ENCODE measurements at regions of chr4 and their contacts with region 1.

Region 1: DNA sequence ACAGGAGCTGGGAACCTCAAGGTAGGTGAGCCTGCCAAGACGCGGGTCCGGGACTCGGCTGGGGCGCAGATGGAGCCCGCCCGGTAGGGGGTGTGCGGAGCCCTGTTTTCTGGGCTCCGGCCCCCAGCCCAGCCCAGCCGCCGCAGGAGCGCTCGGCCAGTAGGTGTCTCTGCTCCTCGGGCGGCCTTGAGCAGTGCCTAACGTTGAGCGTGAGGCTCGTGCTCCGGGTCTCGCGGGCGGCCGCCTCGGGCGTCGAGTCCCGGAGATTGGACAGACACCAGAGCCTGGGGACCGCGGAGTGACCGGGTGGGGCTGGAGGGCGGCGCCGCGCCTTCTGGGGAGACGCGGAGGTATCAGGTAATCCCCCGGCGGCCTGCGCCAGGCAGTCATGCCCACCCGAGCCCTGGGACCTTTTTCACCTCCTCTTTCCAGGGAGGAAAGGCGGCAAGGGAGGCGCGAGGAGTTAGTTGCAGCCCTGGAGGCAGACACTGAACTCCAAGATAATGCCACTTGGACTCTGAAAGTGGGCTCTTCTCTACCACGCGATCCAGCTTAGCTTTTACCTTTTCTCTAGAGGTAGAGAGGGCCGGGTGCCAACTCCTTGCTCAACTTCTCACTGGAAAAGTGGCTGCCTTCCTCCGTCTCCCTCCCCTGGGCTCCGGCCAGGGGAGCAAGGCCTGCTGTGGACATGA is 14.5 kb upstream of the FGG start:
- DNase-seq: peak; percentile 80
- ATAC-seq: peak; percentile 98
- H3K4me3 Mint-ChIP-seq: no peak overlapping the region
- H3K27ac Mint-ChIP-seq: no peak overlapping the region
- H3K4me1 Mint-ChIP-seq: no peaks in the 10 kb centered on the region
- H3K27me3 Mint-ChIP-seq: peaks cover 13% of the 10 kb centered on the region

Region 2: DNA sequence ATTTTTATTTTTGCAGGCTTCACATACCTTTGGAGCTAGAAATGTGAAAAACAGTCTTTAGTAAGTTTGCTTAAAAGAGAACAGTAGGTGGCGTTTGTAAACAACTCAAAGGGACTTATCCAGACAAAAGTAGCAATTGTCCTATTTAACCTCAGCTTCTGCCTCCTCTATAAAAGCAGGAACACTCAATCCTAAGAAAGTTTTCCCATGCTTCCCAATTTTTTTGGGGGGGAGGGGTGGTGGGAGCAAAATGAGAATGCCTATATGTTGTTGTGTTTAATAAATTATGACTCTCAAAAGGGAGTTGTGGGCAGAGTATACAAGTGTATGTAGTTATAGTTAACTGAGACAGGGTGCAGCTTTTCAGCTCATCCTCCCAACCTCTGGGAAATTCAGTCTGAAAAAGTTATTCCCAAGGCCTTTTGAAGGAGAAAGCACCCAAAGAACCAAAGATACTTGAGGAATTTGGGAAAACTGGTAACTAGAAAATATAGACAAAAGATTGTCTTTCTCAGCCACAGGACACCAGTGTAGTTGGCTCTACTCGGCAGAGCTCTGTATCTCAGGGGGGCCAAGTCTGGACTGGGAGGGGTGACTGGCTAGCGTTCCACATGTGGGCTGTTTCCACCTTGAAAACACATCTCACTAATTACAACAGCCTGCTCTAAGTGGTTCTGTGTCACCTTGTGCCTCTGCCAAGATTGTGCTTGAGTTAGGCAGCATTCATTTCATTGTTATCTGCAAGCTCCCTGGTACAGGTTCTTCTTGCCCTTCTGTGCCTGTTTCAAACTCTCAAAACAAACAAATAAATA is 840.8 kb before region 1 on chr4:
- CTCF ChIA-PET with region 1: no interaction called
- POLR2A ChIA-PET with region 1: no interaction called
- intact Hi-C with region 1: loop called in 1 of 2 experiments (anchors 10 kb)
- DNase-seq: no peak
- ATAC-seq: no peak
- H3K4me3 Mint-ChIP-seq: no peak overlapping the region
- H3K27ac Mint-ChIP-seq: no peak overlapping the region
- H3K4me1 Mint-ChIP-seq: peaks cover 27% of the 10 kb centered on the region
- H3K27me3 Mint-ChIP-seq: peaks cover 65% of the 10 kb centered on the region

Region 3: DNA sequence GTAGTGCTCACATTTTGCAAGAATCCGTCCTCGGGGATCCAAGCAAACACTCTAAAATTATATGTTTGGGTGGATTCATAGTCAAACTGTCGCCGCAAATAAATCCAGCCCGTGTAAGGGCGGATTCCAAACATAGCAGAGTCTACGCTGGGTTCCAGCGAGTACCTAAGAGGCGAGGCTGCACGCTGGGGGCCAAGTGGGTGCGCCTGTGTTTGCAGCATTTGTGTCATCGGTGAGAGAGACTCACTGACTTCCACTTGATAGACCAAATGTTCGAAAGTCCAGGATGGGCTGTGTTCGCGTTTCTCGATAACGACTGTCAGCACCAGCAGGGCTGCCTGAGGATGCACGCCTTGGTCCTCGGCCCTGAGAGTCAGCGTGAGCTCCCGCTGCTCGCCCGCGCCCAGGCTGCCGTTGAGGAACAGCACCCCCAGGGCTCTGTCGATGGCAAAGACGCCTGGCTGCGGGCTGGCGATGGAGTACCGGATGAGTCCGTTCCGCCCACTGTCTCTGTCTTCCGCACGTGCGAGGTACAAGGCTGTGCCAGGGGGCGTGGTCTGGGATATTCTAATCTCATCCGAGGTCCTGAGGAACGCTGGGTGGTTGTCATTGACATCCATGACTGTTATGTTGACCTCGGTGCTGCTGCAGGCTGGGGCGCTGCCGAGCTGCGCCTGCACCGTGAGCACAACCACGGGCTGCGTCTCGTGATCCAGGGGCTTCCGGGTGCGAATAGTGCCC is 294.1 kb before region 1 on chr4:
- CTCF ChIA-PET with region 1: no interaction called
- POLR2A ChIA-PET with region 1: no interaction called
- intact Hi-C with region 1: loop called in 1 of 2 experiments (anchors 10 kb)
- DNase-seq: peak; percentile 82
- ATAC-seq: peak; percentile 95
- H3K4me3 Mint-ChIP-seq: peak overlapping the region; percentile 68
- H3K27ac Mint-ChIP-seq: peak overlapping the region; percentile 61
- H3K4me1 Mint-ChIP-seq: peaks cover 11% of the 10 kb centered on the region
- H3K27me3 Mint-ChIP-seq: peaks cover 19% of the 10 kb centered on the region

Region 4: DNA sequence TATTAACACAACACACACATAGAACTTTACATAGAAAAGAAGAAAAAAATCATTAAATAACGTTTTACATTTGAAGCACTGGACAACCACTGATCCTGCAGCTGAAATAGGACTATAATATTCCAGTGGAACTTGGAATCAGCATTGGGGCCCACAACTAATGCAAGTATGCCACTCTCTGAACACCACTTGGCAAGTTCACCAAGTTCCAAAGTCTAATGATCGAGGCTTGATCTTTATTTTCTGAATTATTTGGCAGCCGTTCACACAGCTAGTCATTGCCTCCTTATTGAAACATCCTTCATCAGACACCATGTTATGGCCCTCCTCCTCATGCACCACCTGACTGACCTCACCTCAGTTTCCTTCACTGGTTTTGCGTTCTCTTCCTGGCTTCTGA is 242.9 kb before region 1 on chr4:
- CTCF ChIA-PET with region 1: no interaction called
- POLR2A ChIA-PET with region 1: no interaction called
- intact Hi-C with region 1: no loop called
- DNase-seq: no peak
- ATAC-seq: no peak
- H3K4me3 Mint-ChIP-seq: no peak overlapping the region
- H3K27ac Mint-ChIP-seq: no peak overlapping the region
- H3K4me1 Mint-ChIP-seq: no peaks in the 10 kb centered on the region
- H3K27me3 Mint-ChIP-seq: peaks cover 4% of the 10 kb centered on the region

Region 5: DNA sequence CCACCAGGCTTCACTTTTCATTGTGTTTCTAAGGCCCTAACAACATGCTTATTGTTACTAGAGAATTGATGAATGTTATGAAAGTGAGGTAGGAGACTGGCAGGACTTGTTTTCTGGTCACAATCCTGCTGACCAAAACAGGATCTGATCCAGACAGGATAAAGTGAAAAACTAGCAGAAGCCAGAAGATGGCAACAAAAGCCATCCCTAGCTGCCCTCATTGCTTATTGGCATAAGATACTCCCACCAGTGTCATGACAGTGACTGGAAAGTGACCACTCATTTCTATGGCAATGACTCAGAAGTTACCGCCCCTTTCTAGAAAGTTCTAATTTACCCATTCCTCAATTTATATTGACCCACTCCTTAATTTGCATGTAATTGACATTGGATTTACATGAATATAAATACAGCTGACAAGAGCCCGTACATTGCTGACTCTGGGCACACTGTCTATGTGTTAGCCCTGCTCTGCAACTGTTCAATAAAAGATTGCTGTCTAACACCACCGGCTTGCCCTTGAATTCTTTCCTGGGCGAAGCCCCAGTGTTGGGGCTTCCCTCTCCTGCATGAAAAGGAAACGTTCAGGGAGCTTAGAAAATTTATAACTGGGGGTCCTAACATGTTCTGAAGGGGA is 15.6 kb after region 1 on chr4:
- CTCF ChIA-PET with region 1: interaction called, 10 read pairs
- POLR2A ChIA-PET with region 1: no interaction called
- intact Hi-C with region 1: no loop called
- DNase-seq: no peak
- ATAC-seq: no peak
- H3K4me3 Mint-ChIP-seq: no peak overlapping the region
- H3K27ac Mint-ChIP-seq: no peak overlapping the region
- H3K4me1 Mint-ChIP-seq: no peaks in the 10 kb centered on the region
- H3K27me3 Mint-ChIP-seq: peaks cover 15% of the 10 kb centered on the region

Region 6: DNA sequence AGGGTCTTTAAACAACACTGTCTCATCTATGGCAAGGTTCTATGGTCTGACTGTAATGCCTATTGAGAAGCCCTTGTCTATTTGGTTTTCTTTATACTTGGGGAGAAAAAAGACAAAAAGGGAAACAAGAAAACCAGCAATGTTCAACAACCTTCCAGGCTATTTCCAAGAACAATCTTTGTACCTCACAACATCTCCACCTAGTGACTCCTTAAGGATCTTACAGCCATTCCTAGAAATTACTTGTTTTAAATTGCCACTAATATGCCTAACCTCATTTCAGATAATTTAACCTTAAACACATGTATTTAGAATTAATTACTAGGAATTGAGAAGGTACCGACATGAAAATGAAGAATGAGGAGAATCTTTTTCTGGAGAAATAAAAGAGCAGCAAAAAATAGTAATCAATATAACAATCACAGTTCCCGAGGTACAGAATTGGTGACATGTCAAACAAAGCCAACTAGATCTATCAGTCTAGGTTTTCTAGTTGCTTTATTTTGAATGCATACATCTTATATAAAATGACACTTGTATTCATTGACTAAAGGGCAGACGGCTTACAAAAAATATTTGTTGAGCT is 152.5 kb after region 1 on chr4:
- CTCF ChIA-PET with region 1: no interaction called
- POLR2A ChIA-PET with region 1: no interaction called
- intact Hi-C with region 1: loop called in 1 of 2 experiments (anchors 5 kb)
- DNase-seq: no peak
- ATAC-seq: no peak
- H3K4me3 Mint-ChIP-seq: no peak overlapping the region
- H3K27ac Mint-ChIP-seq: no peak overlapping the region
- H3K4me1 Mint-ChIP-seq: no peaks in the 10 kb centered on the region
- H3K27me3 Mint-ChIP-seq: peaks cover 17% of the 10 kb centered on the region

Region 7: GRCh38 chr4:155376387-155377268 is 749.7 kb after region 1 on chr4 and contains the start of gene MAP9:
- CTCF ChIA-PET with region 1: no interaction called
- POLR2A ChIA-PET with region 1: no interaction called
- intact Hi-C with region 1: loop called in 1 of 2 experiments (anchors 10 kb)
- DNase-seq: peak; percentile 94
- ATAC-seq: peak; percentile 96
- H3K4me3 Mint-ChIP-seq: peak within 1 kb of the TSS; percentile 83
- H3K27ac Mint-ChIP-seq: peak within 1 kb of the TSS; percentile 79
- H3K4me1 Mint-ChIP-seq: peaks cover 16% of the 10 kb centered on the region
- H3K27me3 Mint-ChIP-seq: no peaks in the 10 kb centered on the region
- total RNA-seq, gene MAP9: 8.0 to 8.1 TPM